HEK293 (cell line): ENCODE measurements at regions of chr3 and their contacts with region 1.

Region 1: DNA sequence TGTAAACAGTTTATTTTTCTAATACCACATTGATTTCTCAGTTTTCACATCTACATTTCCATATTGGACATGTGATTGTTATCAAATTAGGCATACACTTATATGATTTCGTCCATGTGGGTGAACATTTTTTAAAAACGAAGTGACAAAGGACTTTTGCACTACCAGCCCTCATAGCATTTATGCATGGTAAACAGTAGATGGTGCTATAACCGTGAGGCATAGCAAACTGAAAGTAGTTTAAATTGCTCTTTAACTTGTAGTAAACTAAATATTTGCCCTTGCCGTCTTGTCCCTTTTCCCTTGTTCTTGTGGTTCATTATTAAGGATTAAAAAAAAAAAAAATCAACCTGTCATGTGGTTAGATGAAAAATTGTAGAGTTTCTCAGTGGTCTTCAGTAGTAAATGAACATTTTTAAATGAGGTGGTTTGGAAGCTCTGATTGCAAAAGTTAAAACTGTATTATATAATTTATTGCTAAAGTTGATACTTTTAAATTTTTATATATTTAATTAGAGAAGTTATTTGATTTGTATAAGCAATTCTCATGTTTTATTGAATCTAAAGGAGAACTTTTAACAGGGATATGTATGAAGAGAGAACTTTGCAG is 24.0 kb downstream of the STX19 start:
- H3K4me3 ChIP-seq: no peak overlapping the region
- H3K27ac ChIP-seq: no peak overlapping the region
- H3K4me1 ChIP-seq: no peaks in the 10 kb centered on the region
- CTCF ChIP-seq: no peak

Region 2: DNA sequence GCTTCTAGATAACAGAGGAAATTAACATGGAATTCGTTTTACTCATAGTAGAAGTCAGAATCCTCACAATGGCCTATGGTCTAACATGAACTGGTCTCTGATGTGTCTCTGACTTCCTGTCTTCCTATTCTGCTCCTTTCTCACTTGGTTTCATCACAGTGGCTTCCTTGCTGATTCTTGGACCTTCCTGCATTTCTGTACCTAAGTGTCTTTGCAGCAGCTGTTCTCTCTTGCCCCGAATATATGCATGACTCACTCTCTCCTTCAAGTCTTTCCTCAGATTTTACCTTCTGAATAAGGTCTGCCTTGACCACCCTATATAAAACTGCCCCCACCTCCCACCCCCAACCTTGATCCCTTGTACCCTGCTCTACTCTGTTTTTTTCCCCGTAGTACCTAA is 10.3 kb before region 1 on chr3:
- CTCF ChIA-PET with region 1: interaction called, 10 read pairs
- POLR2A ChIA-PET with region 1: no interaction called
- H3K4me3 ChIP-seq: no peak overlapping the region
- H3K27ac ChIP-seq: no peak overlapping the region
- H3K4me1 ChIP-seq: peaks cover 4% of the 10 kb centered on the region
- CTCF ChIP-seq: no peak